Endothelial cell of umbilical vein (primary cell): ENCODE measurements at regions of chr3 and their contacts with region 1.

Region 1: GRCh38 chr3:107574650-107575049 is 51.9 kb downstream of the BBX start:
- DNase-seq: peak; percentile 66
- H3K4me3 ChIP-seq: no peak overlapping the region
- H3K27ac ChIP-seq: no peak overlapping the region
- H3K4me1 ChIP-seq: no peaks in the 10 kb centered on the region
- H3K27me3 ChIP-seq: no peaks in the 10 kb centered on the region
- CTCF ChIP-seq: peak; percentile 33 to 46
- POLR2A ChIP-seq: no peak

Region 2: GRCh38 chr3:107543666-107544065 is 31.0 kb before region 1 on chr3:
- CTCF ChIA-PET with region 1: no interaction called
- POLR2A ChIA-PET with region 1: no interaction called
- dilution Hi-C with region 1: no loop called
- intact Hi-C with region 1: no loop called
- DNase-seq: peak; percentile 30
- H3K4me3 ChIP-seq: no peak overlapping the region
- H3K27ac ChIP-seq: no peak overlapping the region
- H3K4me1 ChIP-seq: no peaks in the 10 kb centered on the region
- H3K27me3 ChIP-seq: no peaks in the 10 kb centered on the region
- CTCF ChIP-seq: peak; percentile 7 to 17
- POLR2A ChIP-seq: no peak

Region 3: DNA sequence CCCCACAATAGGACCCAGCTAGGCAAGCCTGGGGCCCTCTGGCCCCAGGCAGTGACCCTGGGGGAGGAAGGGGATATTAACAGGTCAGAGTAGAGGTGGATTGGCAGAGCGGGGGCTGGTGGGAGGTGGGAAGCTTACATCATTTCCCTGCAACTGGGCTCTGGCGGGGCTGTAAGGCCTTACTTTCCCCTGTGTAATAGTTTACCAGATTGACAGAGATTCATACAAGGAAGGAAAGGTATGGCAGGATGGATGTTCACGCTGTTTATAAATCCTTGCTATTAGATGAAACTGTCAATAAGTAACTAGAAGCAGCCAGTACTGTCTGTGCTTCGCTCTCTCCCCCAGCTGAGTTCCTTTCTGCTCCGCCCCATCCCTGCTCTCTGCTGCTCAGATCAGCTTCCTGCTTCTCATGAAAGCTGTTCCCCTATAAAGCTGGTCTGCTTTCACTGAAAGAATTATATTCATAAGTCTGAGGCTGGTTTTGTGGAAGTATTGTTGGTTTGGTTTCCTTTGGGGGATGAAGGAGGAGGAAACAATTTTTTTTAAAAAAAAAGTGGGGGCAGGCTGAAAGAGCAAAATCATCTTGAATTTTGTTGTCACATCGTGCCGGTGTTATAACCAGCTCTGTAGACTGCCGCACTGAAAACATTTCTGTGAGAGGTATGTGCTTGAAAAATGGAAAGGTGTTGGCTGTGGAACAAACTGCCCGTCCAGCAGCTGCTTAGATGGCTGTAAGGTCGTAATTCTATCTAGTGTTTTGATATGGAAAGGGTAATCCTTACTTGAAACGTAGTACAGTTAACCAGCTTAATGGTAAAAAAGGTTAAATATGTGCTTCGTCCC is 24.5 kb after region 1 on chr3:
- CTCF ChIA-PET with region 1: interaction called, 11 read pairs
- POLR2A ChIA-PET with region 1: no interaction called
- dilution Hi-C with region 1: no loop called
- intact Hi-C with region 1: no loop called
- DNase-seq: peak; percentile 84
- H3K4me3 ChIP-seq: peak overlapping the region; percentile 19 to 62 (median 37)
- H3K27ac ChIP-seq: peak overlapping the region; percentile 84
- H3K4me1 ChIP-seq: peaks cover 20% of the 10 kb centered on the region
- H3K27me3 ChIP-seq: no peaks in the 10 kb centered on the region
- CTCF ChIP-seq: no peak
- POLR2A ChIP-seq: no peak

Region 4: GRCh38 chr3:107627962-107628542 is 53.4 kb after region 1 on chr3:
- CTCF ChIA-PET with region 1: interaction called, 13 read pairs
- POLR2A ChIA-PET with region 1: no interaction called
- dilution Hi-C with region 1: no loop called
- intact Hi-C with region 1: no loop called
- DNase-seq: peak; percentile 11
- H3K4me3 ChIP-seq: no peak overlapping the region
- H3K27ac ChIP-seq: no peak overlapping the region
- H3K4me1 ChIP-seq: no peaks in the 10 kb centered on the region
- H3K27me3 ChIP-seq: no peaks in the 10 kb centered on the region
- CTCF ChIP-seq: no peak
- POLR2A ChIP-seq: no peak

Region 5: DNA sequence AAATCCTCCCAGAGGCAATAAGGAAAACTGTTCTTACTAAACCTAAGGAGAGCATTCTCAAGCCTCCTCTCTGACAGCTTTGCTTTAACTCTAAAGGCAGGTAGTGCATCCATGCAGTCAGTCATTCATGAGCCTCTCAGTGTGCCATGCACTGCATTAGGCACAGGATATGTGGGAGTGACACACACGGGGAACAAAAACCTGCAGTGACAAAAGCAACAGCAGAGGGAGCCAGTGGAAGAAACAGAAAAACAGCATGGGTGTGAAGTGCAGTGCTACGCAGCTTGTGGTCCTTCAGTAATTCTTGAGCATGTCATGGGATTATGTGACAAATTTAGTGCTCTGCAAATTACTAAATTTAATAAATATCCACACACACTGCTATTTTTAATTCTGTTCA is 178.8 kb after region 1 on chr3:
- CTCF ChIA-PET with region 1: interaction called, 10 read pairs
- POLR2A ChIA-PET with region 1: no interaction called
- dilution Hi-C with region 1: no loop called
- intact Hi-C with region 1: no loop called
- DNase-seq: peak; percentile 47
- H3K4me3 ChIP-seq: no peak overlapping the region
- H3K27ac ChIP-seq: no peak overlapping the region
- H3K4me1 ChIP-seq: no peaks in the 10 kb centered on the region
- H3K27me3 ChIP-seq: no peaks in the 10 kb centered on the region
- CTCF ChIP-seq: peak; percentile 29 to 52
- POLR2A ChIP-seq: no peak

Region 6: DNA sequence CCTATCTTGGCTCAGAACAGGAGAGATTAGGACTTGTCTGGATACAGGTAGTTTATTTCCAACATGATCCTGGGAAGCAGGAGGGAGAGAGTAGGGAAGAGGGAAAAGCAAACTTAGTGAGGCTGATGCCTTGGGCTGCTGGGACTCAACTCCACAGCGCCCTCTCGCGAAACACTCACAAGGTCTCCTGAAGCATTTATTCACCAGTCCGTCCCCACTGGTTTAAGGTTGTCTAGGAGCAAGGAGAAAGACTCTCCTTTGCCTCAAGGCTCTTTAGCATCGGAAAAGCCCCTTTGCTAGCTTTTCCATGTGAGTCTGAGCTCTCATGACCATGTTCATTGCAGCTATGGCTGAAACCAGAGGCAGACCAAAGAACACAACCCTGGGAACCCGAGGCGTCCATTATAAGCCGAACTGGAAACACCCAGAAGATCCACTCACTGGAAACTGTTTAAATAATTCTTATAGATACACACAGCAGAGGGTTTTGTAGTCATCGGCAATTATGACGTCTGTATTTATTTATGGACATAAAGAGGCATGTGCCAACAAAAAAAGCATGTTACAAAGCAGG is 271.7 kb after region 1 on chr3:
- CTCF ChIA-PET with region 1: interaction called, 16 read pairs
- POLR2A ChIA-PET with region 1: no interaction called
- dilution Hi-C with region 1: no loop called
- intact Hi-C with region 1: loop called (anchors 1 kb)
- DNase-seq: peak; percentile 64
- H3K4me3 ChIP-seq: no peak overlapping the region
- H3K27ac ChIP-seq: no peak overlapping the region
- H3K4me1 ChIP-seq: no peaks in the 10 kb centered on the region
- H3K27me3 ChIP-seq: peaks cover 4% of the 10 kb centered on the region in 2 experiments
- CTCF ChIP-seq: peak; percentile 54 to 79
- POLR2A ChIP-seq: no peak